HCT116 (cell line): ENCODE measurements at regions of chr2 and their contacts with region 1.

Region 1: GRCh38 chr2:72770879-72771461 is 54.9 kb downstream of the EXOC6B start:
- DNase-seq: peak; percentile 56
- ATAC-seq: peak; percentile 72; the same call in 1 of the 2 replicates
- H3K4me3 ChIP-seq: no peak overlapping the region
- H3K27ac ChIP-seq: no peak overlapping the region
- H3K4me1 ChIP-seq: 0 out of 4 replicates have a peak, but pooled peaks cover 0 to 4% of the 10 kb centered on the region in 2 experiments
- H3K27me3 ChIP-seq: no peaks in the 10 kb centered on the region
- CTCF ChIP-seq: peak; percentile 68 to 88 (median 85)
- POLR2A ChIP-seq: no peak
- RAD21 ChIP-seq: peak; percentile 93

Region 2: DNA sequence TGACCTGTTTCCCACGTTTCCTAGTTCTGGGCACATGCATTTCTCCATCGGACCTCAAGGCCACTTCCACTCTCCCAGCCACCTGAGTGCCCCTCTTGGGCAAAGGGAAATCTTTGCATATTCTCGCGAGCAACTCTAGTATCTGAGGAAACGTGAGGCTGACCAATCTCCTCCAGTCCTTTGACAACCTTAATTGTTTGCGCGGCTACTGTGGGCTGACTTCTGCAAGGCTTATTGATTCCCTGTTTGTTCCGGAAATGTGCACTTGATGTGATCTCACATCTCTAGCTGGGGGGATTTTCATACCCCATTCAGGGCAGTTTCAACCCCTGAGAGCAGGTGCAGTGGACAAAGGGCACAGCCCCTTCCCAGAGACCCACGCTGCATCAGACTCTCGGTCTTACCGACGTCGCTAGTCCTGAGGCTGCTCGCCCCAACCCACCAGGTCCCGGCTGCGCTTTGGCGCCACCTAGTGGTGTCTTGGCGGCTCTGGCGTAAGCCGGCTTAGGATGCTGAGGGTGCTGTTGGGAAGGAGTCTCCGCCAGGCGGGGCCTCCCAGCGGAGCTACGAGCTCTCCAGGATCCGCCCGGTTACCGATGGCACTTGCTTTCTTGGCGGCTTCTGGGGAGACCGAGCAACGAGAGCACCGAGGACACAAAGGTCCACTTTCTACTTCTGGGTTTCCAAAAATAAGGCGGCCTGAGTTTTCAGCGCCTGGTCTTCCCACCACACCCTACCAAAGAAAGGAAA is 91.4 kb after region 1 on chr2:
- CTCF ChIA-PET with region 1: interaction called, 24 read pairs
- POLR2A ChIA-PET with region 1: no interaction called
- RAD21 ChIA-PET with region 1: no interaction called
- intact Hi-C with region 1: loop called (anchors 1 kb)
- DNase-seq: peak; percentile 86
- ATAC-seq: peak; percentile 95
- H3K4me3 ChIP-seq: peak overlapping the region; percentile 33 to 51
- H3K27ac ChIP-seq: no peak overlapping the region
- H3K4me1 ChIP-seq: peaks cover 4 to 22% of the 10 kb centered on the region in 2 experiments; a peak in 3 of 4 replicates
- H3K27me3 ChIP-seq: no peaks in the 10 kb centered on the region
- CTCF ChIP-seq: peak; percentile 97 to 99 (median 98)
- POLR2A ChIP-seq: no peak
- RAD21 ChIP-seq: peak; percentile 79

Region 3: GRCh38 chr2:73444202-73444601 is 673.2 kb after region 1 on chr2:
- CTCF ChIA-PET with region 1: no interaction called
- POLR2A ChIA-PET with region 1: no interaction called
- RAD21 ChIA-PET with region 1: no interaction called
- intact Hi-C with region 1: no loop called
- DNase-seq: no peak
- ATAC-seq: no peak
- H3K4me3 ChIP-seq: no peak overlapping the region
- H3K27ac ChIP-seq: no peak overlapping the region
- H3K4me1 ChIP-seq: no peaks in the 10 kb centered on the region
- H3K27me3 ChIP-seq: no peaks in the 10 kb centered on the region
- CTCF ChIP-seq: no peak
- POLR2A ChIP-seq: no peak
- RAD21 ChIP-seq: no peak